Right ventricle myocardium superior (tissue), 1 donor: ENCODE measurements at regions of chr4 and their contacts with region 1.

Region 1: GRCh38 chr4:18735740-18736268 is 714.2 kb upstream of the LCORL start:
- DNase-seq: no peak
- ATAC-seq: peak; percentile 64

Region 2: DNA sequence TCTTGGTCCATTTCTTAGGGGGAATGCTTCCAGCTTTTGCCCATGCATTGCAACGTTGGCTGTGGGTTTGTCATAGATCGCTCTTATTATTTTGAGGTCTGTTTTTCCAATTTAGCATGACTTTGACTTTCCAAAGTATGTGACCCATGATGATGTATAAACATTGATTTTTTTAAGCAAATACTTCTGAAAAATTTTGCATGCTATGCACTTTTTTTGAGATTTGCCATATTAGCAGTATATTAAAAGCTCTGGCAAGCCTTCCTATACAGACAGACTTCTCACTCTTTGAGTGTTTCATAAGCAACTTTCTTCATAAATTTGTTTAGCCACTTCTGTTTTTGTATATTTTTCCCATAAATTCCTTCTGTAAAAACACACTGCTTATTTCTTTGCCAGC is 32.1 kb after region 1 on chr4:
- intact Hi-C with region 1: loop called (anchors 2 kb)
- DNase-seq: no peak
- ATAC-seq: no peak